ENCODE measurements at regions of chr9 and their contacts with region 1.

Region 1: GRCh38 chr9:120928483-120929228 is 2.1 kb upstream of the TRAF1 start:
- DNase-seq: peak; percentile 84
- H3K4me3 ChIP-seq: peak overlapping the region; percentile 70
- H3K27ac ChIP-seq: peak overlapping the region; percentile 78
- H3K4me1 ChIP-seq: no peaks in the 10 kb centered on the region
- H3K27me3 ChIP-seq: no peaks in the 10 kb centered on the region
- CTCF ChIP-seq: no peak

Region 2: DNA sequence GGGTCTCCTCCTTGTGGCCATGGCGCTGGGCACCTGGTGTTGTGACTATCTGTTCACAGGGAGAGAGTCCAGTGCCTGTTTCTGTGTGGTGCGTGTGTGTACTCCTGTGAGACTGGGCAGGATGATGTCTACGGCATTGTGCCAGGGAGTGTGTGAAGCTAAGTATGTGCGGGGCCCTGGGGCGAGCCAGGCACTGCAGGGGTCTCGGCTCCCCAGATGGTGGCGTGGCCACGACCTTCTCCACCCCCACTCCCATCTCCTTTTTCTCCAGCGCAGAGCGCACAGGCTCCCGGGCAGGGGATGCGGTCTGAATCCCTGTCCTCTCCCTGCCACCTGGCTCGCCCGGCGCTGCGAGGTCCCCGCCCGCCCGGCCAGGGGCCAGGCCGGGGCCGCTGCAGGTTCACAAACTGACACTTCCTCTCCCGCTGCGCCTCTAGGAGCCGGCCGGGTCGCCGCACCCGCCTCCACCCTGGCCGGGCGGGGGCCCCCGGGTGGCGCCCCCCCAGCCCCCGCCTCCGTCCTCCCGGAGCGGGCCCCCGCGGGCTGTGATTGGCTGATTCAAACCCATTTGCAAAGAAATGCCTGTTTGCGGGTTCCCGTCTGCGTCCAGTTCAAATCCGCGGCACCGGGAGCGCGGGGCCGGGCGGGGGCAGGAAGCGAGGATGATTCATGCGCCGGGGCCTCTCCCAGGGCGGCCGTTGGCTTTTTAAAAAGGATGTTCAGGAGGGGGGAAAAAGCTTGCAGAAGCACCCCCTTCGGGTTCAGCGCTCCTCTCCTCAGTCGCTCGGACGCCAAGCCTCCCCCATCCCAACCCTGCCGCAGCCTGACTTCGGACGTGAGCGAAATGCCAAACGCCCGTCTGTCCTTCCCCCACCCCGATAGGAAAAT is 52.5 kb before region 1 on chr9:
- intact Hi-C with region 1: loop called (anchors 5 kb)
- DNase-seq: peak; percentile 95
- H3K4me3 ChIP-seq: peak overlapping the region; percentile 71
- H3K27ac ChIP-seq: peak overlapping the region; percentile 96
- H3K4me1 ChIP-seq: no peaks in the 10 kb centered on the region
- H3K27me3 ChIP-seq: no peaks in the 10 kb centered on the region
- CTCF ChIP-seq: no peak

Measured in colonic mucosa (tissue), 4 donors.